Posterior vena cava (tissue), 2 donors: ENCODE measurements at regions of chr1 and their contacts with region 1.

Region 1: GRCh38 chr1:211133836-211134669 is at the start of gene KCNH1:
- DNase-seq: peak; percentile 91
- total RNA-seq, gene KCNH1: 0.32 to 0.33 TPM

Region 2: DNA sequence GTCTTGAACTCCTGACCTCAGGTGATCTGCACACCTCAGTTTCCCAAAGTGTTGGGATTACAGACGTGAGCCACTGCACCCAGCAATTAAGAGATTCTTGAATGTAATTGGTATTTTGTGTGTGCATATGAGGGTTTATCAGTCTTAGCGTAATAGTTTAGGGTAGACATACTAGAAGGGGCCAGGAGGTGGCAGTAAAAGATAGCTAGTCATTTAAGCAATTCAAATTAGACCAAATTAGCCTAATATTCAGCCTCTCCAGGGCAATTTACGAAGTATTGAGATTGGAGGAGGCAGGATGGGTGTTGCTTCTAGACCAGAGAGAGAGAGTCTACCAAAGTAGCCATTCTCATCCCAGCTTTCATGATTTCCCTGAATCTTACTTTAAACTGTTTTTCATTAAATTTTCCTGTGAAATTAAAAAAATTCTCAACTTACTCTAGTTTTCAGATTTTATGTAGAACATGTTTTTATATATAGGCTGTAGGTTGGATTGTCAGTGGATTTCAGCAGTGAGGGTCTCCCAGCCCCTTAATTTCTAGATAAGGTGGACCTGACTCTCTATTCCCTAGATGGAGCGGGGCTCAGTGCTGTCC is 685.7 kb before region 1 on chr1:
- intact Hi-C with region 1: loop called in 1 of 2 experiments (anchors 10 kb)
- DNase-seq: no peak

Region 3: DNA sequence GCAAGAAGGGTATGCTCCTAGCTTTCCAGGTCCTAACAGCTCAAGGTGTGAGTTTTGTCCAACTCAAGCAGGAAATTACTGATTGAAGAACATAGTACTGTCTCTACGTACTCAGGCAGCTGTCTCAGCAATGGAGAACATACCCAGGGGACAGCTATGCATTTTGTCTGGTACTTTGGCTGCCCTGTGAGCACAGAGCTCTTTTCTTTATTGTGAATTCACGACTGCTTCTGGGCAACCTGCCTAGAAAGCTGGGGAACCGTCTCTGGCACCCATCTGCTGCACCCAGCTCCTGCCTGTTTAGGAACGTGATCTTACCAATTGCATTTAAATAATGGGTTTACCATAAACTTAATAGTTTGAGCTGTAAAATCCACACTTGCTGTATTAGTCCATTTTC is 547.3 kb before region 1 on chr1:
- intact Hi-C with region 1: loop called (anchors 1 to 10 kb)
- DNase-seq: no peak

Region 4: DNA sequence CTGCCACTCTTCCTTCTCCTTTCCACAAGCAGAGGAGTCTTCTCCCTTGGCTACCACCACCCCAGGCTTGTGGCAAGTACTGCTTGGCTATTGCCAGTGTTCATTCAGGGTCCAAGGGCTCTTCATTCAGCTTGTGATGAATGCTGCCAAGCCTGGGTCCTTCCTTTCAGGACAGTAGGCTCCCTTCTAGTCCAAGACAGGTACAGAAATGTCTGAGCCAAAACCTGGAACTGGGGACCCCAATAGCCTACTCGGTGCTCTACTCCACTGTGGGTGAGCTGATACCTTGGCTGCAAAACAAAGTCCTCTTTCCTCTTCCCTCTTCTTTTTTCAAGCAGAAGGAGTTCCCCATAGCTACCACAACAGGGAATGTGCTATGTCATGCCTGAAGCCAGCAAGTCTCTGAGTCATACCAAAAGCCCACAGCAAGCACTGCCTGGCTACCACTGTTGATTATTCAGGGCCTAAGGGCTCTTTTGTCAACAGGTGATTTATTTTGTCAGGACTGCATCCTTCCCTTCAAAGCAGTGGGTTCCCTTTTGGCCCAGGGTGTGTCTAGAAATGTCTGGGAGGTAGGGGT is 536.4 kb before region 1 on chr1:
- intact Hi-C with region 1: loop called in 1 of 2 experiments (anchors 10 kb)
- DNase-seq: no peak

Region 5: GRCh38 chr1:211113585-211113984 is 20.5 kb before region 1 on chr1:
- intact Hi-C with region 1: no loop called
- DNase-seq: no peak